ENCODE measurements at regions of chr11 and their contacts with region 1.

Region 1: DNA sequence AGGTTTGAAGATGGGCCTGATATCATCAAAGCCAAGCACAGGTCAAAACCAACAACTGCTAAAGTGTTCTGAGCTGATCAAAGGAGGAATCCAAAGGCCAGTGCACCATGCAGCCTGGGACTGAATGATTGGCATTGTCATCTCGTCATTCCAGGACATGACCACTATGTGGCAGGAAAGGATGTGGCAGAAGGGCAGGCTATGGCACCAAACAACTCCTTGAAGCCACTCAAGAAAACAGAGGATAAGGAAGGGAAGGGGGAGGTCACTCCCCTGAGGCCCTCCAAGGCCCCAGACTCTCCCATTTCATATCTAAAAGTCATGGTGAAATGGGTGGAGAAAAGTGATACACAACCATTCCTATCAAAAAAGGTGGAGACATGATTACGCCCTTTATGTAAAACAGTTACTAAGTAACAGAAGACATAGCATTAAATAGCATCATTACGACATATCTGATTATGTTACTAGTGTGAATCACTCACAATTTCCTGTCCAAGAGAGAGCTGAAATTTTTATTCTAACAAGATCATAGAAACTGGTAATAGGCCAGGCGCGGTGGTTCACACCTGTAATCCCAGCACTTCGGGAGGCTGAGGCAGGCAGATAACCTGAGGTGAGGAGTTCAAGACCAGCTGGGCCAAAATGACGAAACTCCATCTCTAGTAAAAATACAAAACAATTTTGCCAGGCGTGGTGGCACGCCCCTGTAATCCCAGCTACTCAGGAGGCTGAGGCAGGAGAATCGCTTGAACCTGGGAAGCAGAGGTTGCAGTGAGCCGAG is 49.3 kb downstream of the AHNAK start:
- DNase-seq: peak in 5 of 10 donors; percentile 28 to 73 (median 32)

Region 2: DNA sequence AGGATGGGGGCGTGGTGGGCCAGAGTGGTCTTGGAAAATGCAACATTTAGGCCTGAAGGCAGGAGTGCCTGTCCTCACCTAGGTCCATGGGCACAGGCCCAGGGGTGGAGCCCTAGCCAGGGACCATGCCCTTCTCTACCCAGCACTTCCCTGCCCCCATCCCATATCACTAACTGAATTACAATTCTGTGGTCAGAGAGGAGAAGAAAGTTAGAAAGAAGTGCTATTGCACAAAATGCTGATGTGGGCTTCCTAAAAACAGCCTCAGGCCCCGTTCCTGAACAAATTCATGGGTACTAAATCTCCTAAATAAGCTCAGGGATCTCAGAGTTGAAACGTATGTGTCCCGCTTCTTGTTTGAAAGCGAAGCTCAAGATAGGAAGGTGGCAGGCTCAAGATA is 163.6 kb before region 1 on chr11:
- intact Hi-C with region 1: no loop called
- DNase-seq: no peak

Region 3: GRCh38 chr11:62542750-62543567 is 45.6 kb after region 1 on chr11:
- intact Hi-C with region 1: loop called (anchors 1 kb)
- DNase-seq: peak; percentile 42 to 95 (median 66)